HCT116 (cell line): ENCODE measurements at regions of chr15 and their contacts with region 1.

Region 1: DNA sequence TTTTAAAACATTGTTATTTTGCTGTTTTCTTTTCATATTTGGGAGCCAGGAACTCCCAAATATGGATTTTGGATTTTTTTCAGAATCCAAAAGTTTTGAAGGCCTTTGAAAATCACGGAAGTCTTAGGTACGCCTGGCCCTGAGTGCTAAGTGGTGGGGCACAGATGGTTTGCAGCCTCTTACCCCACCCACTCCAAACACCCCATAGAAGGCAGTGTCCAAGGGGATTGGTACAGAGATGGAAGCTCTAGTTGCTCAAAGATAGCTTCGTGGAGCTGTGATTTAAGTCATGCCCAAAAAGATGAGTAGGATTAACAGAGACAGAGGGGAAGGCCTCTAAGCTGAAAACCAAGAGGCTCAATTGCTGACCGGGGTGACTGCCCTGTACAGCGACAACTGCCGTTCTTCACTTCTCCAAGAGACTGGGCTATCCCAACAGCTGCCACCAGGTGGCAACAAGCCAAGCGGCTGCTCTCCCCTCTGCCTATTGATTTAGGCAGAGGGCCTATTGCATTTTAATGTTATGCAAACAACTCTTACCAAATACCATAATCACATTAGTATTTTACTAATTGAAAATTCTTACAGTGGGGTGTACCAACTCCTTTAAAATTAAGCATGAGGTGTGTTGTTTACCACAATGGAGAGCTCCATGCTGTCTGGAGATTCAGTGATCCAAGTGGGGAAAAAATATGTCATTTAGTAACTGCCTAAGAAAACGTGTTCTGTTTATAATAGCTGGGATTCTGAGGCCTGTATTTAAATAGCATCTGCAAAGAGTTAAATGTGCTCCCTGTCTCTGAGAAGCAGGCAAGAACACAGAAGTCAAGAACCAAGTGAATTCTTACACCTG is 64.0 kb upstream of the C15orf61 start:
- DNase-seq: peak; percentile 42
- ATAC-seq: peak; percentile 99
- H3K4me3 ChIP-seq: no peak overlapping the region
- H3K27ac ChIP-seq: no peak overlapping the region
- H3K4me1 ChIP-seq: no peaks in the 10 kb centered on the region
- H3K27me3 ChIP-seq: no peaks in the 10 kb centered on the region
- CTCF ChIP-seq: peak; percentile 71 to 95 (median 93)
- POLR2A ChIP-seq: no peak
- RAD21 ChIP-seq: peak; percentile 75

Region 2: GRCh38 chr15:67479781-67480505 is 23.0 kb after region 1 on chr15:
- CTCF ChIA-PET with region 1: no interaction called
- POLR2A ChIA-PET with region 1: no interaction called
- RAD21 ChIA-PET with region 1: no interaction called
- intact Hi-C with region 1: no loop called
- DNase-seq: no peak
- ATAC-seq: no peak
- H3K4me3 ChIP-seq: no peak overlapping the region
- H3K27ac ChIP-seq: no peak overlapping the region
- H3K4me1 ChIP-seq: no peaks in the 10 kb centered on the region
- H3K27me3 ChIP-seq: no peaks in the 10 kb centered on the region
- CTCF ChIP-seq: no peak
- POLR2A ChIP-seq: no peak
- RAD21 ChIP-seq: no peak

Region 3: DNA sequence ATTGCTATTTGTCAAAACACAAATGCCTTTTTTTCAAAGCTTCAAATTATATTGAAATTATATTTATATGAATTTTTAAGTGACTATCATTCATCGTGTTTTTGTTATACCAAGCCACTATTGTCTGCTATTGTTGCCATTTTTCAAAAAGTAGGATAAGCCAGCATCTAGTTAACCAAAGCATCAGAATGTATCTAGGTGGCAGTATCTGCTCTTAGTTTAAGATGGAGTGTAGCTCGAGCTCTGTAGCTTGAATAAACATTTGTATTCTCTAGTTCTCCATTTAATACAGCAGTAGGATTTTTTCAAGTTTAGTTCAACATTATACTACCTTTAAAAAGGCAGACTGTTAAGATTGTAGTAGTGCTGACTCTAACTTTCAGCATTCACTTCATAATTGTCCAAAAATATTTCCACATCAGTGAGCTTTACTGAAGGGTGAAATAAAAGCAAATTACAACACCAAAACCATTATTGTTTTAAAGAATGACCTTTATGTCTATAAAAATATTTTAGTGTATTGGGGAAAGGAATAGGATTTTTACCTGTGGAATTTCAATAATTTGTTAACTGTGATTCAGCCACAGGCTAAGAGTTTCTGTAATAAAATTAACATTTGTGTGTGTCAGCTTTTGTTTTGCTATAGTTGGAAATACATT is 44.4 kb after region 1 on chr15:
- CTCF ChIA-PET with region 1: no interaction called
- POLR2A ChIA-PET with region 1: no interaction called
- RAD21 ChIA-PET with region 1: no interaction called
- intact Hi-C with region 1: no loop called
- DNase-seq: no peak
- ATAC-seq: no peak
- H3K4me3 ChIP-seq: no peak overlapping the region
- H3K27ac ChIP-seq: no peak overlapping the region
- H3K4me1 ChIP-seq: no peaks in the 10 kb centered on the region
- H3K27me3 ChIP-seq: no peaks in the 10 kb centered on the region
- CTCF ChIP-seq: peak in 2 of 3 experiments; percentile 11 to 20; a peak in 1 of 6 replicates
- POLR2A ChIP-seq: no peak
- RAD21 ChIP-seq: peak; percentile 52

Region 4: DNA sequence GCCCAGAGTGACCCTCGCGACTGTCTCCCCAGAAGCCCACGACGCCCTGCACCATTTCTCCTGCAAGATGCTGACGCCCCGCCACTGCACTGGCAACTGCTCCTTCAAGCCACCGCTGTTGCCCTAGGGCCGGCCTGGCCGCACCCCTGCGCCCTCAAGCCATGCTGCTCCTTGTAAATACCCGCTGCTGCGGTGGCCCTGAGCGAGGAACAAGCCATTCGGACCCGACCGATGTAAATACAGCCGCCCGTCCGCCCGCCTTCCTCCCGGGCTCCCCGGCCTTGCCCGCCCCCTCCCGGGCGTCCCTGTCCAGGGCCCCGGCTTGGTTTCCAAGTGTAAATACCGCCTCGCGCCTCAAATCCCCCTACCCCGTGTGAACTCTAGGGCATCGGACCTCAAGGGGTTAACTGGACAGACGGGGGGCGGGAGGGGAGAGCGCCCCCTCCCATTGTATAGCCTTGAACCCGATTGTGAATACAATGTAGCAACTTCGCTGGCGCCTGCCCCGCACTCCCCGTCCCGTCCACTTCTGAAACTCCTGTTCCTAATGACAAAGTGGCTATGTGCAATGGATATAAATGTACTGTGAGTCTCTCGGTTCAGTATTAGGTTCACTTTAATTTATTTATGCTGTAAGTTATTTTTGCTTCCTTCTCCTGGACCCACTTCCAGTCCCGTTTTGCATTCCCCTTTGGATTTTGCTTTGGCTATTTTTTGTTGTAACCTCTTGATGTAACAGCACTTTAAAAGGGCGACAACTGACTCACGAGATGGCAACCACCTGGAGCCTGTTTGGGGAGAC is 377.0 kb after region 1 on chr15:
- CTCF ChIA-PET with region 1: interaction called, 10 read pairs
- POLR2A ChIA-PET with region 1: no interaction called
- RAD21 ChIA-PET with region 1: no interaction called
- intact Hi-C with region 1: loop called (anchors 1 kb)
- DNase-seq: no peak
- ATAC-seq: peak; percentile 59
- H3K4me3 ChIP-seq: no peak overlapping the region
- H3K27ac ChIP-seq: no peak overlapping the region
- H3K4me1 ChIP-seq: peaks cover 0 to under 1% of the 10 kb centered on the region in 2 experiments; a peak in 2 of 4 replicates
- H3K27me3 ChIP-seq: no peaks in the 10 kb centered on the region
- CTCF ChIP-seq: peak; percentile 16 to 30 (median 27); a peak in 4 of 6 replicates
- POLR2A ChIP-seq: no peak
- RAD21 ChIP-seq: peak; percentile 39; the same call in 1 of the 2 replicates